Stomach (tissue), 19 donors: ENCODE measurements at regions of chr11 and their contacts with region 1.

Region 1: DNA sequence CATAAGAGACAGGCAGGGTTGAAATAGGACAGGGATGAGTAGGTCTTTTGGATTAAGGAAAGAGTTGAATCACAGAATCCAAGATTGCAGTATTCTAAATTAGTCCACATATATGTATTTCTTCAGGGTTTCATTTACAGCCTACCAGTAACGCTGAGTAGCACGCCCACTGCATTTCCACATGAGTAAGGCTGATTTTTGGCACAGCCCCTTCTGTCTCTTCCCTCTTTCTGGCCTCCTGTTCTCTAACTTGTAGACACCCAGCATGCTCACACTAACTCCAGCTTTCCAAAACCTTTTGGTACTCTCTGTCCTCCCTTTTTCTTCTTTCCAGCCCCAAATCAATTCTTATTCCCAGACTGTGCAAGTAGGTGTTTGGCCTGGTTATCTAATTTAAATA is 3.7 kb upstream of the SIK2 start:
- DNase-seq: peak in 1 of 2 donors; percentile 86
- H3K4me3 ChIP-seq: no peak overlapping the region
- H3K27ac ChIP-seq: peak overlapping the region in 3 of 5 donors; percentile 7 to 36 (median 27)
- H3K4me1 ChIP-seq: peaks cover 0 to 24% (median 9%) of the 10 kb centered on the region in 4 donors
- H3K27me3 ChIP-seq: no peaks in the 10 kb centered on the region
- CTCF ChIP-seq: no peak
- EP300 ChIP-seq: no peak
- POLR2A ChIP-seq: no peak

Region 2: DNA sequence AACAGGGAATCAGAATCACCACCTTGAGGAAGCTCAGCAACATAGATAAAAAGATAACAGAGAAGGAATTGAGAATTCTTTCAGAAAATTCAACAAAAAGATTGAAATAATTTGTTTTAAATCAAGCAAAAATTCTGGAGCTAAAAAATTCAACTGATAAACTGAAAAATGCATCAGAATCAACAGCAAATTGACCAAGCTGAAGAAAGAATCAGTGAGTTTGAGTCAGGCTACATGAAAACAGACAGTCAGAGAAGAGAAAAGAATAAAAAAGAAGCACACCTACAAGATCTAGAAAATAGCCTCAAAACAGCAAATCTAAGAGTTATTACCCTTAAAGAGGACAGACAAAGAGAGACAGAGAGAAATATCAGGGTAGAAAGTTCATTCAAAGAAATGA is 115.1 kb before region 1 on chr11:
- intact Hi-C with region 1: no loop called
- DNase-seq: no peak
- H3K4me3 ChIP-seq: no peak overlapping the region
- H3K27ac ChIP-seq: no peak overlapping the region
- H3K4me1 ChIP-seq: no peaks in the 10 kb centered on the region
- H3K27me3 ChIP-seq: no peaks in the 10 kb centered on the region
- CTCF ChIP-seq: no peak
- EP300 ChIP-seq: no peak
- POLR2A ChIP-seq: no peak

Region 3: GRCh38 chr11:111782109-111782741 is 183.7 kb after region 1 on chr11:
- intact Hi-C with region 1: loop called (anchors 5 kb)
- DNase-seq: no peak
- H3K4me3 ChIP-seq: no peak overlapping the region
- H3K27ac ChIP-seq: peak overlapping the region in 1 of 5 donors; percentile 17
- H3K4me1 ChIP-seq: peaks cover 0 to 22% (median 10%) of the 10 kb centered on the region in 4 donors
- H3K27me3 ChIP-seq: no peaks in the 10 kb centered on the region
- CTCF ChIP-seq: no peak
- EP300 ChIP-seq: no peak
- POLR2A ChIP-seq: no peak